ENCODE measurements at regions of chr15 and their contacts with region 1.

Region 1: GRCh38 chr15:89017370-89018066 is 70.7 kb upstream of the ABHD2 start:
- DNase-seq: peak; percentile 66
- H3K4me3 ChIP-seq: peak overlapping the region; percentile 16 to 43 (median 37)
- H3K27ac ChIP-seq: peak overlapping the region; percentile 26
- H3K4me1 ChIP-seq: peaks cover 20% of the 10 kb centered on the region
- H3K27me3 ChIP-seq: no peaks in the 10 kb centered on the region
- CTCF ChIP-seq: peak; percentile 83 to 94

Region 2: GRCh38 chr15:88897456-88898194 is 119.9 kb before region 1 on chr15:
- CTCF ChIA-PET with region 1: no interaction called
- dilution Hi-C with region 1: loop called (anchors 10 kb)
- in situ Hi-C with region 1: loop called in 1 of 2 experiments (anchors 5 kb)
- intact Hi-C with region 1: loop called (anchors 2 kb)
- DNase-seq: peak; percentile 81
- H3K4me3 ChIP-seq: no peak overlapping the region
- H3K27ac ChIP-seq: no peak overlapping the region
- H3K4me1 ChIP-seq: peaks cover 18% of the 10 kb centered on the region
- H3K27me3 ChIP-seq: no peaks in the 10 kb centered on the region
- CTCF ChIP-seq: peak; percentile 38 to 74

Region 3: GRCh38 chr15:88904624-88905327 is 112.7 kb before region 1 on chr15:
- CTCF ChIA-PET with region 1: interaction called, 7 read pairs
- dilution Hi-C with region 1: loop called (anchors 10 kb)
- in situ Hi-C with region 1: loop called (anchors 5 kb)
- intact Hi-C with region 1: loop called (anchors 1 kb)
- DNase-seq: peak; percentile 49
- H3K4me3 ChIP-seq: no peak overlapping the region
- H3K27ac ChIP-seq: no peak overlapping the region
- H3K4me1 ChIP-seq: peaks cover 3% of the 10 kb centered on the region
- H3K27me3 ChIP-seq: no peaks in the 10 kb centered on the region
- CTCF ChIP-seq: peak; percentile 97 to 98

Region 4: GRCh38 chr15:88913017-88913849 is 104.3 kb before region 1 on chr15 and contains the start of gene MFGE8:
- CTCF ChIA-PET with region 1: interaction called, 3 read pairs
- dilution Hi-C with region 1: loop called (anchors 10 kb)
- in situ Hi-C with region 1: loop called in 1 of 2 experiments (anchors 5 kb)
- intact Hi-C with region 1: loop called (anchors 2 kb)
- DNase-seq: peak; percentile 81
- H3K4me3 ChIP-seq: peak within 1 kb of the TSS; percentile 62 to 85 (median 72)
- H3K27ac ChIP-seq: peak within 1 kb of the TSS; percentile 84
- H3K4me1 ChIP-seq: peaks cover 18% of the 10 kb centered on the region
- H3K27me3 ChIP-seq: no peaks in the 10 kb centered on the region
- CTCF ChIP-seq: no peak
- total RNA-seq, gene MFGE8: 81.4 to 145 TPM